ENCODE measurements at regions of chr1 and their contacts with region 1.

Region 1: DNA sequence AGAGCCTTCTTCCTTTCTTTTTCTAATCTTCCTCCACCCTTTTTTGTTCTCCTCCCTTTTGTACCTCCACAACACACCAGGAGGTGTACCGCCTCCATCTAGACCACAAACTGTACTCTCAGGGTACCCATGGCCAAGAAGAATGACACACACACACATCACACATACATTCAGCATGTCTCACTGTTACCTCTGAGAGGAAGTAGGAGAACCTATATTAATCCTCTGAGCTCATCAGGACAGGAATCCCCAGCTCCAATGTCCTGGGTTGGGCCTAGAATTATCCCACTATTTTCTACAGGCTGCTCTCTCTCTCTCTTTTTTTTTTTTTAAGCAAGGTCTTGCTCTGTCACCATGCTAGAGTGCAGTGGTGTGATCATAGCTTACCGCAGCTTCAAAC is 36.7 kb downstream of the ATP2B4 start:
- DNase-seq: no peak
- H3K4me3 Mint-ChIP-seq: peak overlapping the region; percentile 30
- H3K27ac Mint-ChIP-seq: peak overlapping the region; percentile 85
- H3K4me1 Mint-ChIP-seq: peaks cover 53% of the 10 kb centered on the region
- H3K27me3 Mint-ChIP-seq: no peaks in the 10 kb centered on the region

Region 2: DNA sequence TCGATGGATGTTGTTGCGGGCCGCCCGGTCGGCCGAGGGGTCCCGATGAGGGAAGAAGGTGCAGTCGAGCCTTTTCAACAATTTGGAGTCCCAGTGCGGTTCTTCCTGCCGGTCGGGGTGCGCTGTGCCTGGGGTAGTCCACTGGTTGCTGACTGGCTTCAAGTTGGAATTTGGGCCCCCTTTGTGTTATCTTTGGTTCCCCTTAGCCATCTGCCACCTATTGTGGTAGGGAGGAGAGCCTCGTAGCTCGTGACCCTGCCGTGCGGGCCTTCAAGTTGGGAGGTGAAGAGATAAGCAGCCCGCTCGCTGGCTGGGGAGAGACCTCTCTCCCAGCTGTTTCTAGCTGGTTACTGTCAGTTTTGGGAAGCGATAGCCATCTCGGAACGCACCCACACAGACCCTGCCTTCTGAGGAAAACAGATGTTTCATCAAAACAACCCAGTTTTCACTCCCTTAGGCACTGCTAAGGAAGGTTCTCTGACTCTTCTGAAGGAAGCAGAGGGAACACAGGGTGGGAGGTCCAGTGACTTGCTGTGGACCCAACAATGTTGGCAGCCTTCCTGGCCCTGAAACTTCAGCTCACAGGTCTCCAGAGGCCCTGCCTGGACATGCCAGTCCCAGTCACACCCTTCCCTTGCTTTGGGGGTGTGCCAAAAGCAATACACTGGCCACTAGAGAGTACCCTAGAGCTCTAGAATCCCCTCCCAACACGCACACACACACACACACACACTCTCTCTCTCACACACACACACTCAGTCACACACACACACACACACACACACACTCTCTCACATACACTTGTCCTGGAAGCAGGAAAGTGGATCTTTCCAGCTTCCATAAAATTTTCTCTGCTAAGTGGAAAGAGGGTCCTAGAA is 357.0 kb before region 1 on chr1:
- intact Hi-C with region 1: no loop called
- DNase-seq: peak; percentile 41
- H3K4me3 Mint-ChIP-seq: peak overlapping the region; percentile 99
- H3K27ac Mint-ChIP-seq: peak overlapping the region; percentile 87
- H3K4me1 Mint-ChIP-seq: peaks cover 54% of the 10 kb centered on the region
- H3K27me3 Mint-ChIP-seq: no peaks in the 10 kb centered on the region

Region 3: GRCh38 chr1:203673550-203674427 is 10.5 kb after region 1 on chr1:
- intact Hi-C with region 1: loop called (anchors 1 kb)
- DNase-seq: peak; percentile 73
- H3K4me3 Mint-ChIP-seq: peak overlapping the region; percentile 69
- H3K27ac Mint-ChIP-seq: peak overlapping the region; percentile 94
- H3K4me1 Mint-ChIP-seq: peaks cover 55% of the 10 kb centered on the region
- H3K27me3 Mint-ChIP-seq: no peaks in the 10 kb centered on the region